WTC11 (cell line): ENCODE measurements at regions of chr19 and their contacts with region 1.

Region 1: GRCh38 chr19:7304200-7304599 is 10.0 kb upstream of the INSR start:
- DNase-seq: no peak
- ATAC-seq: no peak
- H3K4me3 Mint-ChIP-seq: no peak overlapping the region
- H3K27ac Mint-ChIP-seq: no peak overlapping the region
- H3K4me1 Mint-ChIP-seq: peaks cover 2% of the 10 kb centered on the region; the same call in 1 of the 2 replicates
- H3K27me3 Mint-ChIP-seq: 0 out of 2 replicates have a peak, but pooled peaks cover 3% of the 10 kb centered on the region
- CTCF ChIP-seq: no peak

Region 2: GRCh38 chr19:7326105-7326877 is 22.1 kb after region 1 on chr19:
- CTCF ChIA-PET with region 1: interaction called, 12 read pairs
- POLR2A ChIA-PET with region 1: no interaction called
- DNase-seq: peak; percentile 80
- ATAC-seq: peak; percentile 86
- H3K4me3 Mint-ChIP-seq: no peak overlapping the region
- H3K27ac Mint-ChIP-seq: no peak overlapping the region
- H3K4me1 Mint-ChIP-seq: no peaks in the 10 kb centered on the region
- H3K27me3 Mint-ChIP-seq: peaks cover 5% of the 10 kb centered on the region; the same call in 1 of the 2 replicates
- CTCF ChIP-seq: peak; percentile 54